Activated naive CD4-positive, alpha-beta T cell treated with anti-CD3 and anti-CD28 coated beads for 36 hours (primary cell): ENCODE measurements at regions of chr17 and their contacts with region 1.

Region 1: GRCh38 chr17:74786431-74787055 is 10.4 kb upstream of the NAT9 start:
- DNase-seq: peak; percentile 40
- H3K4me3 Mint-ChIP-seq: no peak overlapping the region
- H3K27ac Mint-ChIP-seq: peak overlapping the region; percentile 54
- H3K4me1 Mint-ChIP-seq: peaks cover 59% of the 10 kb centered on the region
- H3K27me3 Mint-ChIP-seq: no peaks in the 10 kb centered on the region

Region 2: GRCh38 chr17:74403512-74404137 is 382.9 kb before region 1 on chr17:
- CTCF ChIA-PET with region 1: no interaction called
- intact Hi-C with region 1: no loop called
- DNase-seq: no peak
- H3K4me3 Mint-ChIP-seq: no peak overlapping the region
- H3K27ac Mint-ChIP-seq: no peak overlapping the region
- H3K4me1 Mint-ChIP-seq: peaks cover 4% of the 10 kb centered on the region
- H3K27me3 Mint-ChIP-seq: no peaks in the 10 kb centered on the region

Region 3: GRCh38 chr17:74736513-74737298 is 49.8 kb before region 1 on chr17 and contains the start of gene RAB37:
- CTCF ChIA-PET with region 1: interaction called, 17 read pairs
- intact Hi-C with region 1: no loop called
- DNase-seq: no peak
- H3K4me3 Mint-ChIP-seq: peak within 1 kb of the TSS; percentile 75
- H3K27ac Mint-ChIP-seq: peak within 1 kb of the TSS; percentile 77
- H3K4me1 Mint-ChIP-seq: peaks cover 42% of the 10 kb centered on the region
- H3K27me3 Mint-ChIP-seq: no peaks in the 10 kb centered on the region
- total RNA-seq, gene RAB37: 2.1 to 2.3 TPM

Region 4: GRCh38 chr17:74748529-74749365 is 37.8 kb before region 1 on chr17 and contains the start of gene NHERF1:
- CTCF ChIA-PET with region 1: interaction called, 52 read pairs
- intact Hi-C with region 1: loop called (anchors 2 kb)
- DNase-seq: peak; percentile 93
- H3K4me3 Mint-ChIP-seq: peak within 1 kb of the TSS; percentile 94
- H3K27ac Mint-ChIP-seq: peak within 1 kb of the TSS; percentile 93
- H3K4me1 Mint-ChIP-seq: peaks cover 54% of the 10 kb centered on the region
- H3K27me3 Mint-ChIP-seq: no peaks in the 10 kb centered on the region
- total RNA-seq, gene NHERF1: 70.8 to 77.6 TPM

Region 5: DNA sequence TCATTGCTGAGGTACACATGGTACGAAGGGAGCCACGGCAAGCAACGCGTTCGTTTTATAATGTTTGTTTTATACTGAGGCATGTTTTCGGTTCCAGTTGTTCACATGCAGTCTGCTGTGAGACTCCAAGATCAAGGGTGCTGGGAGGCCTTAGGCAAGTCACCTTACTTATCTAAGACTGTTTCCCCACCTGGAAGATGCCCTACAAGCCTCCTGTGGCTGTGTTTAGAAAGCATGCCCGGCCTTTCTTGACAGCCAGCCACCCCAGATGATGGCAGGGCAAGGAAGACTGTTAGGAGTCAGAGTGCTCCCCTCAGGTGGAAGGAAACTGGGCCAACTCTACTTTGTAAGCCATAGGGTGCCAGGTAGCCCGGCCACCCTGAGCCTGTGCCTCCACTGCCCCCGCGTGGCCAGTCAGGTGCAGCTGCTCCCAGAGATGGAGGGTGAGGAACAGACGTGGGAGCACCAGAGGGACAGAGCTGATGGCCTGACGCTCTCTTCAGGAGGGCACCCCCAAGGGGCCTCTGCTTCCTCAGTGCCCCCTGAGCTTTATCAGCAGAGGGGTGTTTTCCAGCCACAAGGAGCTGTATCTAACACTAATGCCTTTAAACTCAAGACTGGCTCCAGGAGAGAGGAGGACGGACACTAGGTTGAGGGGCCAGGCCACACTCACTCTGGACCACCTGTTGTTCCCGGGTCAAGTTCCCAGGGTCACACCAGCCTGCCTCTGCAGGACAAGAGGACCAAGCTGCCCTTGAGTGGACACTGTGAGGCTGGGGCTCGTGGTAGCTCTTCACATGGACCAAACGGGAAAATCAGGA is 15.8 kb before region 1 on chr17:
- CTCF ChIA-PET with region 1: interaction called, 41 read pairs
- intact Hi-C with region 1: no loop called
- DNase-seq: peak; percentile 84
- H3K4me3 Mint-ChIP-seq: no peak overlapping the region
- H3K27ac Mint-ChIP-seq: peak overlapping the region; percentile 79
- H3K4me1 Mint-ChIP-seq: peaks cover 32% of the 10 kb centered on the region
- H3K27me3 Mint-ChIP-seq: no peaks in the 10 kb centered on the region

Region 6: DNA sequence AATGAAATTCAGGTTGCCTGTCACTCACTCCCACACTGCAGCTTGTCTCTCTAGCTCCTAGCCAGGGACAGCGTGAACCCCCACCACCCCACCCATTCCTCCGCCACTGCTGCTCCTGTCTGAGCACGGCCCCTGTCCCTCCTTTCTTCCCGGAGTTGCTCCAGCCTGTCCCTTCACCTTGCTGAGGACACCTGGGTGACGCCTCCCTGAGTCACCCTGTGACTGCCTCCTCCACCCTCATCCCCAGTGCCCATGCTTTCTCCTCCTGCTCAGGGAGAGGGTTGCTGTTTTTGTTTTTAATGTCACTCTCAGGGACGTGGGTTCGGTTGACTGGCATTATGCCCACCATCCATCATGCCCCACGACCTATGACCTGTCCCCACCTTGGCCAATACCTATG is 15.4 kb after region 1 on chr17:
- CTCF ChIA-PET with region 1: interaction called, 10 read pairs
- intact Hi-C with region 1: no loop called
- DNase-seq: no peak
- H3K4me3 Mint-ChIP-seq: no peak overlapping the region
- H3K27ac Mint-ChIP-seq: no peak overlapping the region
- H3K4me1 Mint-ChIP-seq: no peaks in the 10 kb centered on the region
- H3K27me3 Mint-ChIP-seq: no peaks in the 10 kb centered on the region

Region 7: GRCh38 chr17:74852237-74853047 is 65.9 kb after region 1 on chr17:
- CTCF ChIA-PET with region 1: interaction called, 165 read pairs
- intact Hi-C with region 1: no loop called
- DNase-seq: peak; percentile 64
- H3K4me3 Mint-ChIP-seq: peak overlapping the region; percentile 71
- H3K27ac Mint-ChIP-seq: no peak overlapping the region
- H3K4me1 Mint-ChIP-seq: peaks cover 3% of the 10 kb centered on the region
- H3K27me3 Mint-ChIP-seq: peaks cover 43% of the 10 kb centered on the region

Region 8: DNA sequence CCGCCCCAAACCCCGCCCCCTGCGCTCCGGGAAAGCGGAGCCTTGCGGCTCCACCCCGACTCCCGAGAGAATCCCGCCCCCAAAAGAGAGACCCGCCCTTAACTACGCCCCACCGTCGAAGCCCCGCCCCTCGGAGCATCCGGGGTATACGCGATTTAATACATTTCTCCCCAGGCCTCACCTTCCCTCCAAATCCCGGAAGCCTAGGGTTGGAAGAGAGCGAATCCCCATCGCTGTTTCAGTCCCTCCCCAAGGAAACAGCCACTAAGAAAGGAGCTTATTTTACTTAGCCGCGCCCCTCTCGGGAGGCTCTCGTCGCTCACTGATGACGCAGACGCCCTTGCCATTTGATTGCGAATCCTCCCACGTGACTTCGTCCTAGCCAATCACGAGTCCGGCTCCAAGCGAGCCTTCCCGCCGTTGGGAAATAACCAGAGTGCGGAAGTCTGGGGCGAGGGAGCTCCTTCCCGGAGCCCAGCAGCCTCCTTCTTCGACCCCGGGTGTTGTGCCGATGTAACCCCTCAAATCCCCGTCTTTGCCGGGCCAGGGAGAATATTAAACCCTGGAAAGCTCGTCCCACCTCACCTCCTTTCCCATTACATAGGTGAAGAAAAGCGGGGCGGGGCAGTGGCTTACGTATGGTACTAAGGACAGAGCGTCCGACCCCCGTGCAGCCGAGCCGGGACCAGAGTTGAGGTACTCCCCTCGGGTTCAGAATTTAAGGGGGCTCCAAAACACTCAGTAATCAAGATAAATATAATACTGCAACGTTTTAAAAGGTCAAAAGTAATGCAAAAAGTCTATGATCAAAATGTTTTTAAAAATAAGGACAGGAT is 86.7 kb after region 1 on chr17:
- CTCF ChIA-PET with region 1: interaction called, 27 read pairs
- intact Hi-C with region 1: no loop called
- DNase-seq: peak; percentile 100
- H3K4me3 Mint-ChIP-seq: peak overlapping the region; percentile 88
- H3K27ac Mint-ChIP-seq: peak overlapping the region; percentile 91
- H3K4me1 Mint-ChIP-seq: peaks cover 27% of the 10 kb centered on the region
- H3K27me3 Mint-ChIP-seq: no peaks in the 10 kb centered on the region